ENCODE measurements at regions of chr3 and their contacts with region 1.

Region 1: GRCh38 chr3:71875461-71875947 is 90.6 kb upstream of the PROK2 start:
- DNase-seq: peak; percentile 79 to 83 (median 79)
- ATAC-seq: peak; percentile 99 to 100 (median 99)
- H3K4me3 ChIP-seq: no peak overlapping the region
- H3K27ac ChIP-seq: no peak overlapping the region
- H3K4me1 ChIP-seq: no peaks in the 10 kb centered on the region
- H3K27me3 ChIP-seq: no peaks in the 10 kb centered on the region
- CTCF ChIP-seq: peak; percentile 79 to 89 (median 87)
- POLR2A ChIP-seq: no peak

Region 2: DNA sequence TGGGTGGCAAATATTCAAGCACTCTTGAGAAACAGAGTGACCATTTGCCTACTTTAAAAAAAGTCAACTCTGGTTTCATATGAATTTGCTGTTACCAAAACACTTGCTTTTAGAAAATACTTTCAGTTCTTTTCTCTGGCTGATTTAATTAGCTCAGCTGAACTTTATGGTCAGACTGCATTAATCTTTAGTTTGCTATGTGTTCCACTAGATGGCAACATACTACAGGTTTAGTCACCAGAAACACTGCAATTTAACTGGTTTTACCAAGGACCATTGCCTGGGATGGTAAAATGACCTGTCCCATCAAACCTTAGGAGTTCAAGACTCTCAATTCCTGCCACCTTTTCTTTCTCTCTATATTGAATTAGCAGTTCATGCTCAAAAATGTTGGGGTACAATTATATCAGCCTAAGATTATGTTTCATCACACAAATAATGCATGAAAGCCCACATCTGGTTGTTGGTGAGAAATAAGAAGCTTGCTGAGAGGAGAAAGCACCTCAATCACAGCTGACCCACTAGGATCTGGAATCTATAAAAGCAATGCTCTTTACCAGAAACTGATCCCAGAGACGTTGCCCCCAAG is 164.5 kb before region 1 on chr3:
- intact Hi-C with region 1: loop called in 1 of 2 experiments (anchors 10 kb)
- DNase-seq: no peak
- ATAC-seq: peak; percentile 88 to 92 (median 90)
- H3K4me3 ChIP-seq: no peak overlapping the region
- H3K27ac ChIP-seq: no peak overlapping the region
- H3K4me1 ChIP-seq: no peaks in the 10 kb centered on the region
- H3K27me3 ChIP-seq: no peaks in the 10 kb centered on the region
- CTCF ChIP-seq: peak; percentile 62 to 70 (median 64)
- POLR2A ChIP-seq: no peak

Region 3: DNA sequence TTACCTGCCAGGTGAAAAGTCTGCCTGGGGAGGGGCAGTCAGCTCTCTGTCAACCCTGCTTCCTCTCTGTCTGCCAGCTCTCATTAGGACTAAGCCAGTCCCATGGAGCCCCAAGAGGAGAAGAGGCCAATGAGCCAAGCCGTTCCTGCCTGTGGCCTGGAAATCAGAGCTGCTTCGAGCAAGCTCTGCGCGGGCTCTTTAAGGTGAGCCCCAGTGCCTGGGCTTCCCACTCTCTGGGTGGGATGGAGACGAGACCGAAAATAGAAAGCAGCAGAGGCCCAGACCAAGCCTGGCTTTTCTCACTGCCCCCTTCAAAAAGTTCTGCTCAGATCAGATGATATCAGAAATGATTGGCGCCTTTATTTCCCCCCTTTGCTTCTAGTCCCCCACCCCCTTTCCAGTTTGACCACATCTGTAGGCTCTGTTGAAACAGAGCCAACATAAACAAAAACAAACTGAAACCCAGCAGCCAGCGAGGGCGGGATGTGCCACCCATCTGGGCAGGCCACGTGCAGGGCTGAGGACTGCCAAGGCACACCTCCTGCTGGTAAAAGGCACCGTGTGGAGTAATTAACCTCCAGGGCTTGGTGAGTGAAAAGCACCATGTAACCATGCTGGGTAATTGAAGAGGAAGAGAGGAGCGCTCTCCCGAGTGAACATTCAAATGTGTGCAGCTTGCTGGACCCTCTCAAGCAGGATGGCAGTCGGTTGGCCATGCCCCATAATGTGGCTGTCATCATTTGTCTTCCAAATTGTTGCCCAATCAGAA is 380.5 kb after region 1 on chr3:
- intact Hi-C with region 1: no loop called
- DNase-seq: peak; percentile 73 to 89 (median 78)
- ATAC-seq: peak; percentile 89 to 93 (median 90)
- H3K4me3 ChIP-seq: no peak overlapping the region
- H3K27ac ChIP-seq: peak overlapping the region in 1 of 3 donors; percentile 21
- H3K4me1 ChIP-seq: peaks cover 0 to 20% (median 6%) of the 10 kb centered on the region in 4 donors
- H3K27me3 ChIP-seq: no peaks in the 10 kb centered on the region
- CTCF ChIP-seq: peak in 3 of 4 donors; percentile 10 to 33 (median 11)
- POLR2A ChIP-seq: no peak

Region 4: DNA sequence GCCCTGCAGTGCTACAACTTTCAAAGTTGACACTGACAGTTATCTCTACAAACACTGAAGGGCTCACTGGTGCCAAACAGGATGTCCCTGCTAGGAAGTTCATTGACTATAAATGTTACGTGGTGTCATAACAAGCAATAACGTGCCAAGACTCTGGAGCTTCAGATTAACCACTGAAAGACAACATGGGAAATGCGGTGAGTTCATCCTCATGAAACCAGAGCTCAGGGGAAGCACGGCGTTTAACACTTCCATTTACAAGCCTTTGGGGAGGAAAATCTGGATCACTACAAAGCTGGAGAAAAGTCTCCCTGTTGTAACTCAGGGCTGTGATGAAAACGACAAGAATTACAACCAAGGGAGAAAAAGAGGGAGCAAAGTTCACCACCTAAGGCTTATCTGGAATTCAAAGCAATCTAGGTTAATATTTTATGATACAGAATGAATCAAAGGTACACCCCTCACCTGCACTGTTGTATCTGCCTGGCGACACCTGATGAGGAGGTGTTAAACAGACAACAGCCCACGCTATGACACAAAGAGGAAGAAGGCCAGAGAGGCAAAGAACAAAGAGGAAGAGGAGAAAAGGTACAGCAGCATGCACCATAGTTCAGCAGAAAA is 945.8 kb after region 1 on chr3:
- intact Hi-C with region 1: loop called in 1 of 2 experiments (anchors 10 kb)
- DNase-seq: peak in 2 of 3 donors; percentile 25 to 74
- ATAC-seq: peak; percentile 81 to 92 (median 88)
- H3K4me3 ChIP-seq: no peak overlapping the region
- H3K27ac ChIP-seq: peak overlapping the region; percentile 52 to 69 (median 61)
- H3K4me1 ChIP-seq: peaks cover 0 to 29% (median 11%) of the 10 kb centered on the region in 4 donors
- H3K27me3 ChIP-seq: no peaks in the 10 kb centered on the region
- CTCF ChIP-seq: no peak
- POLR2A ChIP-seq: no peak

Measured in right lobe of liver (tissue), 6 donors.